ENCODE measurements at regions of chr13 and their contacts with region 1.

Region 1: DNA sequence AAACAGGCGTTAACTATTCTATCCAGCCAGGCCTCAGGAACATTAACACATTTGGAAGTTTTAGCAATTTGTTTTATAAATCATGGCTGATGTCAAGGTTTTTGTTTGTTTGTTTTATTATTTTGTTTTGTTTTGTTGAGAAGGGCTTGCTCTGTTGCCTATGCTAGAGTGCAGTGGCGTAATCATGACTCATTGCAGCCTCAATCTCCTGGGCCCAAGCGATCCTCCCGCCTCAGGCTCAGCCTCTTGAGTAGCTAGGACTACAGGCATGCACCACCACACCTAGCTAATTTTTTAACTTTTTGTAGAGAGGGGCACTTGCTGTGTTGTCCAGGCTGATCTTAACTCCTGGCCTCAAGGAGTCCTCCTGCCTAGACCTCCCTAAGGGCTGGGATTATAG is 28.3 kb downstream of the NUP58 start:
- DNase-seq: no peak
- ATAC-seq: no peak

Region 2: DNA sequence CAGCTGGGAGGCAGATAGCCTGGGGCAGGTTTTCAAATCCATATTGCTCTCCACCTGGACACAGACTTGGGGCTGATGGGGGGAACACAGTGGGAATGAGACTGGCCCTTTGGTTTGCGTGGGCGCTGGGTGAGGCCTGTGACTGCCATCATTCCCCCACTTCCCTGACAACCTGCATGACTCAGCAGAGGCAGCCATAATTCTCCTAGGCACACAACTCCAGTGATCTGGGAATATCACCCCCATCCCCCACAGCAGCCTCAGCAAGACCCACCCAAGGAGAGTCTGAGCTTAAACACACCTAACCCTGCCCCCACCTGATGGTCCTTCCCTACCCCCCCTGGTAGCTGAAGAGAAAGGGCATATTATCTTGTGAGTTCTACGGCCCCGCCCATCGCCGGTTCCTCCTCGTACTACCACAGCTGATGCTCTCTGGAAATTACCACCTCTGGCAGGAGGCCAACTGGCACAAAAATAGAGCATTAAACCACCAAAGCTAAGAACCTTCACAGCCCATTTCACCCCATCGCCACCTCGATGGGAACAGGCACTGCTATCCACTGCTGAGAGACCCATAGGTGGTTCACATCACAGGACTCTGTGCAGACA is 494.7 kb before region 1 on chr13:
- intact Hi-C with region 1: no loop called
- DNase-seq: no peak
- ATAC-seq: no peak

Region 3: GRCh38 chr13:25253687-25254086 is 76.0 kb before region 1 on chr13:
- intact Hi-C with region 1: loop called (anchors 10 kb)
- DNase-seq: no peak
- ATAC-seq: no peak